ENCODE measurements at regions of chr7 and their contacts with region 1.

Region 1: DNA sequence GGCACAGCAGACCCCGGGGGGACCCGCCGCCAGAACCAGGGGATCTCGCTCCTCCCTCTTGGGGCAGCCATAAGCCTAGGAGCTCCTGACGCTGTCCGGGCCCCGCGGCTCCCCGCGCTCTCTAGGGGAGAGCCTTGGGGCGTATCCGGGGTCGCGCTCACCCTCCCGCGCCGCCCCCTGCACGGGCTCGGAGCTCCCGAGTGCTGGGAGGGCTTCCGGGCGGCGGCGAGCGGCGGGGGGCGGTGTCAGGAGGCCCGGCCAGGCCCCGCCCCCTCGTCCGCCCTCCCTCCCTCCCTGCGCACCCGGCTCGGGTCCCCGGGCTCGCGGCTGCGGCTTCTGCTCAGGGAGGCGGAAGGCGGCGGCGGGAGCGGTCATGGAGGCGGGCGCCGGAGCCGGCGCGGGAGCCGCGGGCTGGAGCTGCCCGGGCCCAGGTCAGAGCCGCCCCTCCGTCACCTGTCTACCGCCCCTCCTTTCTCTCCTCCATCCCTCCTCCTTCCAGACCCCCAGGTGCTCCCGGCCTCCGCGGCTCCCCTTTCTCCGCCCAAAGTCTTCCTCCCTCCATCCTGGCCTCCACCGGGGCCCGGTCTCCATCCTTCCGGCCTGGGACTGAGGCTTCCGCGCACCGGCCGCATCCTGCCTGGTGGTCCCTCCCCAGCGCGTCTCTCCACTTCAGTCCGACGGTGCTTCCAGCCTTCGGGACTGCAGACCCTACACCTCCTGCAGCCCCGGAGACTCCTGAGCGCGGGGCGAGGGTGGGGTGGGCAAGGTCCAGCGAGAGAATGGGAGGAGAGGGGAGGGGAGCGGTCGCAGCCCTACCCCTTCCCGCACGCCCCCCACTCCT is 427 bp upstream of the CCDC136 start:
- DNase-seq: peak in 9 of 10 donors; percentile 45 to 85 (median 70)
- H3K4me3 ChIP-seq: peak overlapping the region; percentile 67 to 94 (median 86)
- H3K27ac ChIP-seq: peak overlapping the region in 53 of 59 donors; percentile 28 to 88 (median 72)
- H3K27me3 ChIP-seq: no peaks in the 10 kb centered on the region
- CTCF ChIP-seq: peak in 1 of 56 donors; percentile 15

Region 2: GRCh38 chr7:128830231-128831177 is 39.2 kb after region 1 on chr7 and contains the start of gene FLNC:
- intact Hi-C with region 1: loop called (anchors 5 kb)
- DNase-seq: peak in 2 of 10 donors; percentile 25 to 31
- H3K4me3 ChIP-seq: peak within 1 kb of the TSS; percentile 34 to 72 (median 56)
- H3K27ac ChIP-seq: peak within 1 kb of the TSS in 40 of 59 donors; percentile 49 to 99 (median 95)
- H3K27me3 ChIP-seq: peaks cover 0 to 14% (median 0%) of the 10 kb centered on the region in 45 donors
- CTCF ChIP-seq: no peak
- total RNA-seq, gene FLNC: 4.1 to 35.8 (median 10.9) TPM

Region 3: DNA sequence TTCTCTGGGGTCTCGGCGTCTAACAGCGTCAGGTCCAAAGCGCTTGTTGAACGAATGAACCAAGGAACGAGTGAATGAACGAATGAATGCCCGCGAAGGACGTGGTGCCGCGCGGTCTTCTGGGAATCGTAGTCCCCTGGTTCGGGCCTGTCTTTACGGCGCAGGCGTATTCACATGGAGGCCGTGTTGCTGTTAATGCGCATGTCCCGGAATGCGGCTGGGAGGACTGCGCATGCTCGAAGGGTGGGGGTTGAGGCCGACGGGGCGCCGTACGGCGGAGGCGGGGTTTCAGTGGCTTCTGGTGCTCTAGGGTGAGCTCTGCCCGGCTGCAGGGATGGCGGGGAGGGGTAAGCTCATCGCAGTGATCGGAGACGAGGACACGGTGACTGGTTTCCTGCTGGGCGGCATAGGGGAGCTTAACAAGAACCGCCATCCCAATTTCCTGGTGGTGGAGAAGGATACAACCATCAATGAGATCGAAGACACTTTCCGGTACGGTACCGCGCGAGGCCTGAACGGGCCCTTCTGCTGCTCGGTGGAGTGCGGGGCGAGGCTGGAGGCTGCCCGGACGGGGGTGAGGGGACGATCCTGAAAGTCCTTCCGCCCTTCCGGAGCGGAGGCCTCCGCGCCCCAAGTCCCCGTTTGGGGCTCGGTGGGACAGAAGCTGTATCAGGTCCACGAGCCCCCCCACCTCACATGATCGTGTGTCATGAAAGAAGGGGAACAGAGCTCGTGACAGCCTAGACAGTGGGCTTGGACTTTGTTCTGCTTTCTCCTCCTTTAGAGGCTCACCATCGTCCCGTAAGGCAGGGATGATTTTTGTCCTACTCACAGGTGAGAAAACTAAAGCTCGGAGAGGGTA is 71.5 kb after region 1 on chr7 and contains the start of gene ATP6V1F:
- intact Hi-C with region 1: loop called (anchors 5 kb)
- DNase-seq: peak; percentile 92 to 96 (median 94)
- H3K4me3 ChIP-seq: peak within 1 kb of the TSS; percentile 68 to 99 (median 89)
- H3K27ac ChIP-seq: peak within 1 kb of the TSS in 57 of 59 donors; percentile 7 to 93 (median 79)
- H3K27me3 ChIP-seq: no peaks in the 10 kb centered on the region
- CTCF ChIP-seq: peak in 31 of 56 donors; percentile 6 to 53 (median 27)
- total RNA-seq, gene ATP6V1F: 118 to 295 (median 219) TPM

Region 4: DNA sequence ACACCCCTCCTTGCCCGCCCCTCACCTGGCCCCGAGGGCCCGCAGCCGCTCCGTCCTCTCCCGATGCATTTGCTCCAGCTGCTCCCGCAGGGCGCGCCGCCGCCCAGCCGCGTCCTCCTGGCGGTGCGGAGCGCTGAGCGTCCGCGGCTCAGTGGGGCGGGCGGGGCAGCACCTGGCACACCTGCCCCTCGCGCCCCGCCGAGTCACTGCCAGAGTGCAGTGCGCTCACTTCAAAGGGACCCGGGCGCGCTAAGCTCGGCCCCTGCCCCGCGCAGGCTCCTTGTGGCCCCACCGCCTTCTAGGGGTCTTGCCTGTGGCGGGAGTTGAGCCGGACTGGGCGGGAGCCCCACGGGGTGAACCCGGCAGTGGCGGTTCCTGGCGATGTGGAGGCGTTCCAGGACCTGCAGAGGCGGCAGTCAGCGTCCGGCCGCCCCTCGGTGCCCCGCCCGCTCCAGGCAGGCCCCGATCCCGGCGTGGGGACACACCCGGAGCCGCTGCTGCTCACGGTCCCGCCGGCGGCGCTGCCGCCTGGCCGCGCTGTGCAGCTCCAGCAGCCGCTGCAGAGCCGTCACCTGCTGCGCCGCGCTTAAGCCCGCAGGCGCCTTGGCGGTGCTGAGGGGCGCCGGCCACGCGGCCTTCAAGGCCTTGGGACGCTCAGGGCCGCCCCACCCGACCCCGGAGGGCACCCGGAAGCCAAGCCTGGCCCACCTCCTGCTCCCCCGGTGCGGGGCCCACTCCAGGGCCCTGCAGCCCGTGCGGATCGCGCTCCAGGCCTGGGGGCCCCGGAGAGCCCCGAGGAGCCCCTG is 78.0 kb after region 1 on chr7:
- intact Hi-C with region 1: loop called (anchors 5 kb)
- DNase-seq: peak in 7 of 10 donors; percentile 23 to 78 (median 53)
- H3K4me3 ChIP-seq: peak overlapping the region; percentile 55 to 82 (median 71)
- H3K27ac ChIP-seq: peak overlapping the region in 52 of 59 donors; percentile 6 to 90 (median 71)
- H3K27me3 ChIP-seq: no peaks in the 10 kb centered on the region
- CTCF ChIP-seq: peak in 16 of 56 donors; percentile 5 to 40 (median 25)

Region 5: DNA sequence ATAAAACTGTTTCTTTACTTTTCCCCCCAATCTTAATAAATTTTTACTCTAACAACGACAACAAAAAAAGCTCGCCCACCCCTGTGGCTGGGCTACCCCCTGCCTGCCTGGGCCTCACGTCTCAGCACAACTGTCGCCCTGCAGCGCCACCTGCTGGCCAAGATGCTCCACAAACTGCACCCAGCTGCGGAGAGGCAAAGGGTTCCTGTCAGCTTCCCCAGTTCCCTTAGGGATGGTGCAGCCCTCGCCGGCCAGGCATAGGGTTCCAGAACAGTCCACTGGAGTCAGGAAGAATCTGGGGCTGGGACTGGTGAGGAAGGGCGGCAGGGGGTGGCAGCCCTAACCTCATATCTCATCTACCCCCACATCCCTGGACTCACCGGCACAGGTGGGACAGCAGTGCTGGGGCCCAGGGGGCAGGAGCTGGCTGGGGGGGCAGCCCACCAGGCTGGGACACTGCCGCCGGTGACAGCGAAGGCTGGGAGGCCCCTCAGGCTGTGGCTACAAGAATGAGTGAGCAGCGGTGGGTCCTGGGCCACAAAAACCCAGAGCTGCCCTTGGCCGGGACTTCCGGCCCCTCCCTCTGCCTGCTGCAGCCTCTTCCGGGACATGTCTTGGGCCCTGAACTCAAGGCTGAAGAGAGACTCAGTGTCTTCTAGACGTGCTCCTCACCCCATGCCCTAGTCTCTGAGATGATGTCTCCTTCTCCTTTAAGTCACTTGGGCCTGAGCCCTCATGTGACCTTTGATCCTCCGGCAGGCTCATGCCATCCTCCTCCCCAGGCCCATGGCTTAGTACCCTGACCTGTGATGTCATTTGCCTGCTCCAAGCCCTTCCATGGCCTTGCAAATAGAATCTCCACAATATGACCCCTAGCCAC is 92.5 kb after region 1 on chr7:
- intact Hi-C with region 1: loop called in 1 of 2 experiments (anchors 5 kb)
- DNase-seq: peak; percentile 75 to 89 (median 84)
- H3K4me3 ChIP-seq: no peak overlapping the region
- H3K27ac ChIP-seq: no peak overlapping the region
- H3K27me3 ChIP-seq: peaks cover 0 to 24% (median 0%) of the 10 kb centered on the region in 45 donors
- CTCF ChIP-seq: peak; percentile 80 to 98 (median 93)